ENCODE measurements at regions of chr5 and their contacts with region 1.

Region 1: DNA sequence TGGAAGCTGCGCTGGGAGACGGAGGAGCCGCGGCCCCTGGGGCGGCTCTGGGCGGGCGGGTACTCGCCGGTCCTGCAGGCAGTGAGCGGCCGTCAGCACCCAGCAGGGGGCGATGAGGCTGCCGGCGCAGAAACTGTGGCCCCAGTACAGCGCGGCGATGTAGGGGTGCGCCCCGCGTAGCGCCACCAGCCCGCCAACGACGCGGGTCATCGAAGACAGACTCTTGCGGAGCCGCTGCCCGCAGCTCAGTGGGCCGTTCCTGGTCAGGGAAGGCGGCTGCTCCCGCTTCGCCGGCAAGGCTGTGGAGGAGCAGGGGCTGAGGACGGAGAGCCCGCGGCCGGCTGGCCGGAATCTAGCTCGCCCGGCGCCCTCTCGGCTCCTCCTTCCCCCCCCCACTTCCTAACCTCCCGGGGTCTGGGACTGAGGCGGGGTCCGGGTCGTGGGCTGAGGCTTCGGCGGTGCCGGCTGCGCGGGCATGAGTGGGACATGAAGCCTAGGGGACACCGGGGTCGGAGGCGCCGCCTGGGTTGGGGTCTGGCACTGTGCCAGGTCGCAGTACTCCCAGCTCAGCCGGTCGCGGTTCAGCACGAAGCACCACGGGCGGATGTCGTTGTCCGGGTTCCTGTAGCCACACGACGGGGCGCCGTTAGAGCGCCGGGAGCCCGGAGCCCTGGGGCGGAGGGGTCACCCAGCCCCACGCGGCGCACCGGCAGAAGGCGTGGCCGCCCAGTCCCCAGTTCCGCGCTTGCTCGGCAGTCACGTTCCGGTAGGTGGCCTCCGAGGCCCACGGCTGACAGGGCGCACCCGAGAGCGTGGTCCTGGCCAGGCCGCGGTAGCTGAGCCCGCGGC is 3.6 kb upstream of the PFN3 start:
- DNase-seq: peak; percentile 74 to 86 (median 84)
- ATAC-seq: peak; percentile 87
- H3K4me3 ChIP-seq: peak overlapping the region; percentile 61
- H3K4me3 Mint-ChIP-seq: peak overlapping the region in 9 of 10 donors; percentile 76 to 88 (median 84)
- H3K27ac ChIP-seq: peak overlapping the region; percentile 41
- H3K27ac Mint-ChIP-seq: peak overlapping the region in 1 of 9 donors; percentile 19
- H3K4me1 ChIP-seq: peaks cover 25 to 33% of the 10 kb centered on the region in 2 donors
- H3K4me1 Mint-ChIP-seq: peaks cover 7 to 35% (median 23%) of the 10 kb centered on the region in 7 donors
- H3K27me3 ChIP-seq: no peaks in the 10 kb centered on the region
- H3K27me3 Mint-ChIP-seq: peaks cover 0 to 54% (median 0%) of the 10 kb centered on the region in 5 donors

Region 2: GRCh38 chr5:176429972-176430371 is 974.0 kb before region 1 on chr5:
- CTCF ChIA-PET with region 1: no interaction called
- POLR2A ChIA-PET with region 1: no interaction called
- intact Hi-C with region 1: no loop called
- DNase-seq: no peak
- ATAC-seq: no peak
- H3K4me3 ChIP-seq: no peak overlapping the region
- H3K4me3 Mint-ChIP-seq: no peak overlapping the region
- H3K27ac ChIP-seq: no peak overlapping the region
- H3K27ac Mint-ChIP-seq: no peak overlapping the region
- H3K4me1 ChIP-seq: no peaks in the 10 kb centered on the region
- H3K4me1 Mint-ChIP-seq: peaks cover 0 to 10% (median 6%) of the 10 kb centered on the region in 7 donors
- H3K27me3 ChIP-seq: no peaks in the 10 kb centered on the region
- H3K27me3 Mint-ChIP-seq: peaks cover 0 to 15% (median 6%) of the 10 kb centered on the region in 5 donors

Region 3: GRCh38 chr5:177311723-177312648 is 92.0 kb before region 1 on chr5 and contains the start of gene MXD3:
- CTCF ChIA-PET with region 1: interaction called, 18 read pairs
- POLR2A ChIA-PET with region 1: interaction called, 4 read pairs
- intact Hi-C with region 1: loop called (anchors 1 to 2 kb)
- DNase-seq: peak; percentile 87 to 97 (median 92)
- ATAC-seq: peak; percentile 95
- H3K4me3 ChIP-seq: peak within 1 kb of the TSS; percentile 77
- H3K4me3 Mint-ChIP-seq: peak within 1 kb of the TSS; percentile 78 to 93 (median 84)
- H3K27ac ChIP-seq: peak within 1 kb of the TSS; percentile 51
- H3K27ac Mint-ChIP-seq: peak within 1 kb of the TSS in 6 of 9 donors; percentile 42 to 92 (median 59)
- H3K4me1 ChIP-seq: peaks cover 21 to 22% of the 10 kb centered on the region in 2 donors
- H3K4me1 Mint-ChIP-seq: peaks cover 11 to 49% (median 32%) of the 10 kb centered on the region in 7 donors
- H3K27me3 ChIP-seq: no peaks in the 10 kb centered on the region
- H3K27me3 Mint-ChIP-seq: peaks cover 0 to 5% (median 0%) of the 10 kb centered on the region in 5 donors
- total RNA-seq, gene MXD3: 8.8 to 39.8 (median 18.3) TPM

Region 4: DNA sequence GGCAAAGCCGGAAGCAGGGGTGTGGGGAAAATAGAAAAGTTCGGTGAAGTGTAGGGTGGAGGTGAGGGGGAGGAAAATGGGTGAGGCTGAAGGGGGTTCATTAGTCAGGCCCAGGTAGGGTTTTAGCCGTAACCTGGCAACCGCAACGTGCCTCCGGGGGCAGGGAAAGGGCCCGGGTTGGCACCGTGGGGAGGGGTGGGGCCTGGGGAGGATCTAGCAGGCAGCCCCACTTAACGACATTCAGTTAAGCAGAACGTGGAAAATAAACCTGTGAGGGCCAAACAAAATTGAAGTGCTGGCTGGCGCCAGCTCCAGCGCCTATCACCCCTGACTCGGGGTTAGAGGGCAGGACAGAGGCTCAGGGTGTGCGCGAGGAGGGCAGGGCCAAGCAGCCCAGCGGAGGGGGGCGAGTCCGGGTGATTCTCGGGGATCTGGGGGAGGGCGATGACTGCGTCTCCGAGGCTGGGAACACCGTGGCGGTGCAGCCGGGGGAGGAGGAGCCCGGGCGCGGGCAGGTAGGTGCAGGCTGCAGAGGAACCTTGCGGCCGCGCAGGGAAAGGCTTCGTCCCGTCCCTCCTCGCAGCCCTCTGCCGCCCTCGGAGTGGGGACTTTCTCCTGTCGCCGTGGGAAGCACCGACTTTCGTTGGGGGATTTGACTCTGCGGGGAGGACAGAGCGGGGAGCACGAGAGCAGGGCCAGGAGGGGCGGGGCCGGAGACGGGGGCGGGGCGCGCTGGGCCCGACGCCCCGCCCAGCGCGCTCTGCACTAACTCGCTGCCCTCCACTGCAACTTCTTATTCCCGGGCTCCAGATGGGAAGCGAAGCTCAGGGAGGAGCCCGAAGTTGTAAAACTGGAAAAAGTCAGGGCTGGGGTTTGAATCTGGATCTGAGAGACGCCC is 41.2 kb before region 1 on chr5:
- CTCF ChIA-PET with region 1: interaction called, 3 read pairs
- POLR2A ChIA-PET with region 1: interaction called, 5 read pairs
- intact Hi-C with region 1: loop called in 1 of 2 experiments (anchors 2 kb)
- DNase-seq: peak; percentile 32 to 79 (median 55)
- ATAC-seq: peak; percentile 80
- H3K4me3 ChIP-seq: peak overlapping the region; percentile 61
- H3K4me3 Mint-ChIP-seq: peak overlapping the region; percentile 83 to 97 (median 90)
- H3K27ac ChIP-seq: peak overlapping the region; percentile 88
- H3K27ac Mint-ChIP-seq: peak overlapping the region; percentile 82 to 94 (median 91)
- H3K4me1 ChIP-seq: peaks cover 53 to 61% of the 10 kb centered on the region in 2 donors
- H3K4me1 Mint-ChIP-seq: peaks cover 42 to 78% (median 64%) of the 10 kb centered on the region in 7 donors
- H3K27me3 ChIP-seq: no peaks in the 10 kb centered on the region
- H3K27me3 Mint-ChIP-seq: no peaks in the 10 kb centered on the region

Region 5: DNA sequence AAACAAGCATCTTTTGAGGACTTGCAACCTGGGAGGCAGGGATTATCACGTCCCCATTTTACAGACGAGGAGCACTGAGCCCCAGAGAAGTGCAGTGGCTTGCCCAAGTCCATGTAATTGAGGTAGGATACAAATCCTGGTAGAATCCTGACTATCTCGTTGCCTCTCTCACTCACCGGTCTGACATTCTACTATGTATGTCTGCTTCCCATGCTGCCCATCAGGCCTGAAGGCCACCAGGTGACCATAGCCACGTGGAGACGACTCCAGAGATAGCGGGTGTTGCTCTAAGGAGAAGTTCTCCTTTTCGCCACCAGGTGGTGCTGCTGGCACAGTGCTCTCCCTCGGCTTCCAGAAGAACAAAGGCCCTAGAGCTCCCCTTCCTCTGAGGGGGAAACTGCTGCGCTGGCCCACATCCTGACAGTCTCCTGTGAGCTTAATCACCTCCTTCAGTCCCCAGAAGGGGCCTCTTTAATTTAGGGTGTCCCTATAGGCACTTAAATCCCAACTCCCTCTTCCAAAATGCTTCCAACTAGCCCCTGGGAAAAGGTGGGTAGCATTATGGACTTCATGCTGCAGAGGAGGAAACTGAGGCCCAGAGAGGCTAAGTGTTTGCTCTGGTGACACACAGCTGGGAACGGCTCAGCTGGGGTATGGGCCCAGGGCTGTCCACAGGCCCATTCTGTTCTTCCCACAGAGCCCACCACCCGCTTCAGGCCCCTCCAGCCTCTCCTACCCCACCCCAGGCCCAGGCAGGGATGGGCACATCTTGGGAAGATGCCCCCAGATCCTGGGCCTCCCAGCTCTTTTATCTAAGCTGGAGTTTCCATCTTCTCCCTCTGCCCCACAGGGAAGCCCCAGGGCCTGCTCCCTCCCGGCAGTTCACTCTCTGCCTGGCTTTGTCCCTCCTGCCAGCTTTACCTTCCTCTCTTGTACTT is 13.4 kb before region 1 on chr5:
- CTCF ChIA-PET with region 1: interaction called, 116 read pairs
- POLR2A ChIA-PET with region 1: interaction called, 48 read pairs
- intact Hi-C with region 1: loop called (anchors 1 kb)
- DNase-seq: peak; percentile 76 to 91 (median 88)
- ATAC-seq: peak; percentile 89
- H3K4me3 ChIP-seq: no peak overlapping the region
- H3K4me3 Mint-ChIP-seq: peak overlapping the region in 9 of 10 donors; percentile 29 to 68 (median 53)
- H3K27ac ChIP-seq: peak overlapping the region; percentile 63
- H3K27ac Mint-ChIP-seq: peak overlapping the region in 8 of 9 donors; percentile 65 to 86 (median 78)
- H3K4me1 ChIP-seq: peaks cover 31 to 33% of the 10 kb centered on the region in 2 donors
- H3K4me1 Mint-ChIP-seq: peaks cover 30 to 39% (median 34%) of the 10 kb centered on the region in 7 donors
- H3K27me3 ChIP-seq: no peaks in the 10 kb centered on the region
- H3K27me3 Mint-ChIP-seq: peaks cover 0 to 6% (median 0%) of the 10 kb centered on the region in 5 donors

Region 6: DNA sequence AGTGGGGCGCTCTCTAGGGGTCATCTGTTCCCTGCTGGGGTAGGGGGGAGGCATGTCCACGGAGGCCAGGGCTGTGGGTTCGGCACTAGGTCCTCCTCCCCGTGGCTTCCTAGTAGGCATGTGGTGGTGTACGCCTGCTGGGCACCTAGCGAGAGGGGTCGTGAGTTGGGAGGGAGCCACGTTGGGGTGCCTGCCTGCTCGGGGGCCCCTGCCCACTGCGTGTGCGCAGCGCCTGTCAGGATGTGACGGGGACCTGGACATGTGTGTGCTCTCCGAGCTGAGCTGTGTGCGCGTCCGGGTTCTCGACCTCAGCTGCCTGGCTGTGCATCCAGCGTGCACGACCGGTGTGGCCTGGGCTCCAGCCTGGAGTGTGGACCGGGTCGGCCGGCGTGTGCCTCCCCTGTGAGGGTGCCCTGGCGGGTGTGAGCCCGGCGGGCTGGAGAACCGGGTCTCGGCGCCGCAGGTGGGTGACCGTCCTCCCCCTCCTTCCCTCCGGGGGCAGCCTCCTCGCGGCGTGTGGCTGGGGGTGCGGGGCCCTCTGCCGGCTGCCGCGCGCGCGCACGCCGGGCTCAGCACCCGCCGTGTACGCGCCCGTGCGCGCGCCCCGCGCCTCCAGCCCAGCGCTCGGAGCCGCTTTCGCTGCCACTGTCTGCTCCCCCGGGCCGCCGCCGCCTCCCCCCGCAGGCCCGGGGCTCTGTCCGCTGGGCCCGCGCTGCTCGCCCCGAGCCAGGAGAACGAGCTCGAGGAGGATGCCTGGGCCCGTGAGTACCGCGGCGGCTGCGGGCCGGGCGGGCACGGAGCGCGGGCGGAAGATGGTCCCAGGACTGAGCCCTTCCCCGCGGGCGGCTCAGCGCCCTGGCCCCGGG is 42.4 kb after region 1 on chr5 and contains the start of gene PRR7:
- CTCF ChIA-PET with region 1: interaction called, 189 read pairs
- POLR2A ChIA-PET with region 1: interaction called, 156 read pairs
- intact Hi-C with region 1: loop called (anchors 2 kb)
- DNase-seq: peak; percentile 71 to 85 (median 81)
- ATAC-seq: peak; percentile 75
- H3K4me3 ChIP-seq: peak within 1 kb of the TSS; percentile 64
- H3K4me3 Mint-ChIP-seq: peak within 1 kb of the TSS; percentile 77 to 85 (median 82)
- H3K27ac ChIP-seq: peak within 1 kb of the TSS; percentile 97
- H3K27ac Mint-ChIP-seq: peak within 1 kb of the TSS; percentile 86 to 97 (median 92)
- H3K4me1 ChIP-seq: peaks cover 7 to 34% of the 10 kb centered on the region in 2 donors
- H3K4me1 Mint-ChIP-seq: peaks cover 31 to 52% (median 41%) of the 10 kb centered on the region in 7 donors
- H3K27me3 ChIP-seq: no peaks in the 10 kb centered on the region
- H3K27me3 Mint-ChIP-seq: peaks cover 0 to 10% (median 0%) of the 10 kb centered on the region in 5 donors
- total RNA-seq, gene PRR7: 6.4 to 31.8 (median 6.8) TPM

Region 7: DNA sequence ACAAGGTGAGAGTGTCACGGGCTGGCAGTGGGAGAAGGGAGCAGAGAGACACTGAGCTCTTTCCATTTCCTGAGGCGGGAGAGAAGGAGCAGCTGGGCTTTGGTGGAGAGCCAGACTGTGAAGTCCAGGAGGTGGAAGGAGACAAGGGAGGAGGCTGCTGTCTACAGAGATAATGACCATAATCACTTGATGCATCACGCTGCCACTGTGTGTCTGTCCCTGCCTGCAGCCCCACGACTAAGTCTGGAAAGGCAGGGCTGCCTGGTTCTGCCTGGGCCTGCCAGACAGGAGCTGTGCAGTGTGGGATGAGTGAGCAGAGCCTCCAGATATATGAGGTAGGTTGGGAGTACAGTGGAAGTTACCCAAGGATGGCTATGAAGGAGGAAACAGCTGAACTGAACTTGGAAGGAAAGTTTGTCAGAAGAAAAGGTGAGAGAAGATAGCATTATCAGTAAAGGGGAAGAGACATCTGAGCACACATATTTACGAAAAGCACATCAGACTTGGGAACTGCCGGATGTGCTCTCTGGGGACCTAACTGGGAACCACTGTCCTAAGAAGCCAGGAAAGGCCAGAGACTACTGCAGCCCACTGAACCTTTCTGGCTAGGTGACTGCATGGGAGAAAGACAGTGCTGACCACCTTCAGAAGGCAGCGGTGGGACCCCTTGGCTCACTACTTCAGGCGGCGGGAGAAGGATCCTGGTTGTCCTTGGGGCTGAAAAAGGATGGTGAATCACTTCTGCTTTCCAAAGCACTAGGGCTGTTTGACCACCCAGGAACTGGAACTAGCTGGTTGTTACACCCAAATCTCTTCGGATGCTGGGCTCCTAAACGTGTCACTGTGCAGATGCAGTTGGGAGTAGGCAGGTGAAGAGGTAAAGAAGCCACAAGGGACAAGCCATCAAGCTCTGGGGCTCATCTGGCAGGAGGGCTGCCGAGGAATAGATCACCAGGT is 125.5 kb after region 1 on chr5:
- CTCF ChIA-PET with region 1: no interaction called
- POLR2A ChIA-PET with region 1: no interaction called
- intact Hi-C with region 1: no loop called
- DNase-seq: no peak
- ATAC-seq: no peak
- H3K4me3 ChIP-seq: no peak overlapping the region
- H3K4me3 Mint-ChIP-seq: no peak overlapping the region
- H3K27ac ChIP-seq: no peak overlapping the region
- H3K27ac Mint-ChIP-seq: peak overlapping the region in 6 of 9 donors; percentile 12 to 47 (median 43)
- H3K4me1 ChIP-seq: no peaks in the 10 kb centered on the region
- H3K4me1 Mint-ChIP-seq: peaks cover 0 to 4% (median 2%) of the 10 kb centered on the region in 7 donors
- H3K27me3 ChIP-seq: no peaks in the 10 kb centered on the region
- H3K27me3 Mint-ChIP-seq: no peaks in the 10 kb centered on the region

Region 8: DNA sequence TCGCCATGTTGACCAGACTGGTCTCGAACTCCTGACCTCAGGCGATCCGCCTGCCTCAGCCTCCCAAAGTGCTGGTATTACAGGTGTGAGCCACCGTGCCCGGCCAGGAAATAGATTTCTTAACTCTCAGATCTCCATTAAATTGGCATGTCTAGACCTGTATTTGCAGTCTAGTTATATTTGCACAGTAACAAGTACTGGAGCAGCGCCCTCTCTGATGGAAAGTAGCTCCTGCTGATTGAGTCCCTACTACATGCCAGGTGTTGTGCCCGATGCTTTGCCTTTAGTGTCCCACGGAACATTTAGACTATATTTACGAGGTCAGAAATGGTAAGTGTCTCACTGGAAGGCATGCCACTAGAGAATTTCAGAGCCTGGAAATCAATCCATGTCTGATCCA is 172.2 kb after region 1 on chr5:
- CTCF ChIA-PET with region 1: no interaction called
- POLR2A ChIA-PET with region 1: no interaction called
- intact Hi-C with region 1: no loop called
- DNase-seq: no peak
- ATAC-seq: no peak
- H3K4me3 ChIP-seq: no peak overlapping the region
- H3K4me3 Mint-ChIP-seq: no peak overlapping the region
- H3K27ac ChIP-seq: no peak overlapping the region
- H3K27ac Mint-ChIP-seq: no peak overlapping the region
- H3K4me1 ChIP-seq: no peaks in the 10 kb centered on the region
- H3K4me1 Mint-ChIP-seq: no peaks in the 10 kb centered on the region
- H3K27me3 ChIP-seq: no peaks in the 10 kb centered on the region
- H3K27me3 Mint-ChIP-seq: peaks cover 0 to 7% (median 0%) of the 10 kb centered on the region in 5 donors

Region 9: DNA sequence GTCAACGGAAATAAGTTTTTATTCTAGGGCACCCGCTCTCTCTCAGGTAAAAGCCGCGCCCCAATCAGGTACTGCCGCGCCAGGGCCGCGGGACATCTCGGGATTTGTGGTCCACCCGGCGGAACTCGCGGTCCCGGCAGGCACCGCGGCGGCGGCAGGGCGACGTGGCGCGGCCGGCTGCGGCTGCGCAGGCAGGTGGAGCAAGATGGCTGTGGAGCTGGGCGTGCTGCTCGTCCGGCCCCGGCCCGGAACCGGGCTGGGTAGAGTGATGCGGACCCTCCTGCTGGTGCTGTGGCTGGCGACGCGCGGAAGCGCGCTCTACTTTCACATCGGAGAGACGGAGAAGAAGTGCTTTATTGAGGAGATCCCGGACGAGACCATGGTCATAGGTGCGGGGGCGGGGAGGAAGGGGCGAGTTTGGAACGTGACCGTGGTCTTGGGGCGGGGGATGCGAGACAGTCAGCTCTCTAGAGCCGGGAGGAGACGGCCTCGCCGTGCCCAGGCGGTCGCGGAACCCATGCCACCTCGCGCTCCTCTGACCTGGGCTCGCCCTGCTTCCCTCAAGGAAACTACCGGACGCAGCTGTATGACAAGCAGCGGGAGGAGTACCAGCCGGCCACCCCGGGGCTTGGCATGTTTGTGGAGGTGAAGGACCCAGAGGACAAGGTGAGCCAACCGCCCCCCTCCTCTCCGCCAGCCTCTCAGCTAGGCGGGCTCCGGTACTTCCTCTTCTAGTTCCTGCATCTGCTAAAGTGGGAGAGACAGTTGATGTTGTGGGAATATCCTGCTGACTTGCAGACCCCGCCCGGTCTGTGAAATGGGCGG is 188.2 kb after region 1 on chr5 and contains the start of gene TMED9:
- CTCF ChIA-PET with region 1: no interaction called
- POLR2A ChIA-PET with region 1: no interaction called
- intact Hi-C with region 1: no loop called
- DNase-seq: peak; percentile 83 to 92 (median 90)
- ATAC-seq: peak; percentile 99
- H3K4me3 ChIP-seq: peak within 1 kb of the TSS; percentile 95
- H3K4me3 Mint-ChIP-seq: peak within 1 kb of the TSS; percentile 81 to 100 (median 96)
- H3K27ac ChIP-seq: peak within 1 kb of the TSS; percentile 71
- H3K27ac Mint-ChIP-seq: peak within 1 kb of the TSS; percentile 83 to 99 (median 95)
- H3K4me1 ChIP-seq: peaks cover 16% of the 10 kb centered on the region in 2 donors
- H3K4me1 Mint-ChIP-seq: peaks cover 18 to 35% (median 22%) of the 10 kb centered on the region in 7 donors
- H3K27me3 ChIP-seq: no peaks in the 10 kb centered on the region
- H3K27me3 Mint-ChIP-seq: peaks cover 8 to 29% (median 12%) of the 10 kb centered on the region in 5 donors
- total RNA-seq, gene TMED9: 50.5 to 144 (median 67.5) TPM